Activated T-helper 1 cell treated with anti-CD3 and anti-CD28 coated beads, Interleukin-12 subunit alpha, Interleukin-12 subunit beta, Interleukin-2, Interleukin-4 antibody, amounts not matched to agents 30 ng/mL and 10 ng/mL and 1 ng/mL, durations not matched to agents 14 hours and 24 hours and 36 hours (primary cell): ENCODE measurements at regions of chr19 and their contacts with region 1.

Region 1: DNA sequence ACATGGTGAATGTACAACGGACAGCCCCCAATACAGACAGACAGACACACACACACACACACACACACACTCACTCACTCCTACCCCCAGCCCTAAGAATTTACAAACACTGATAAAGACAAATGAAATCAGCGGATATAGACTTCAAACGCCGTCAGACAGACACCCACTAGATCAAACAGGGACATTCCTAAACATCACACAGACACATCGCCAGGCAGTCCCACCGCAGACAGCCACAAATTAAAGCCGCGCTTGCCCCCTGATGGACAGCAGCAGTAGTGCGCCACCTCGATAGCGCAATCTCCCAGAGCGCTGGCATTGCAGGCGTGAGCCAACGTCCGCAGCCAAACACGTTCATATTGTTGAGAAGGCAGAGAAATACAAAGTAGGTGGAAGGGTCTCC is 24.7 kb upstream of the ADGRE1 start:
- DNase-seq: peak; percentile 86
- H3K4me3 Mint-ChIP-seq: peak overlapping the region; percentile 79
- H3K27ac Mint-ChIP-seq: peak overlapping the region; percentile 74
- H3K4me1 Mint-ChIP-seq: peaks cover 13% of the 10 kb centered on the region
- H3K27me3 Mint-ChIP-seq: no peaks in the 10 kb centered on the region

Region 2: DNA sequence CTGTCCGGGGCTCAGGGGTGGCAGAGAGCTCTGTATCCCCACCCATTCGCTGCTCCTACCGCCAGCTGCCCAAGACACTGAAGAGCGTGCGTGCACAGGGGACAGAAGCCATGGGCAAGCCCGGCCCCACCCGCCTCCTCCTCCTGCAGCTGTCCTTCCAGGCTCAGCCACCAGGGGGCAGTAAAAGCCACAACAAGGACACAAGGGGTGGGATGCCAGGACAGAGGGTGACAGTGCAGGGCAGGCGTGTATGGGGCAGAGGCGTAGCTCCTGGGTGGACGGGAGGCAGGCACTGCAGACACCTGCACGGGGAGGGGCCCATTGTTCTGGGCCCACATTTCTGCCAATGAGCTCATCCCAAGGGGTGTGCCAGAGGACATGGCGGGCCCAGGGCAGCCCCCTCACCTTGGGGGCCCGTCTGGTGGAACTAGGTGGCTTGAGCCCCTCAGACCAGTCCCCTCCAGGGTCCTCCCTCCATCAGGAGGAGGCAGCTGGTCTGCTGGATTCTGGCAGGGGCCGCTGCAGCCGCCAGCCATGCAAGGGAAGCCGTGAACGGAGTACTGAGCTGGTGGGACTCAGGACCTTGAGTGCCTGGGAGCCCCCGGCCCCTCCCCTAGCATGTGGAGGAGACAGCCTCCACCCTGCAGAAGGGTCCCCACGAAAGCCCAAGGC is 644.0 kb before region 1 on chr19:
- intact Hi-C with region 1: loop called (anchors 1 kb)
- DNase-seq: peak; percentile 72
- H3K4me3 Mint-ChIP-seq: no peak overlapping the region
- H3K27ac Mint-ChIP-seq: no peak overlapping the region
- H3K4me1 Mint-ChIP-seq: no peaks in the 10 kb centered on the region
- H3K27me3 Mint-ChIP-seq: no peaks in the 10 kb centered on the region

Region 3: GRCh38 chr19:6424939-6425731 is 437.5 kb before region 1 on chr19:
- intact Hi-C with region 1: loop called (anchors 1 kb)
- DNase-seq: peak; percentile 99
- H3K4me3 Mint-ChIP-seq: peak overlapping the region; percentile 79
- H3K27ac Mint-ChIP-seq: peak overlapping the region; percentile 90
- H3K4me1 Mint-ChIP-seq: peaks cover 28% of the 10 kb centered on the region
- H3K27me3 Mint-ChIP-seq: no peaks in the 10 kb centered on the region

Region 4: DNA sequence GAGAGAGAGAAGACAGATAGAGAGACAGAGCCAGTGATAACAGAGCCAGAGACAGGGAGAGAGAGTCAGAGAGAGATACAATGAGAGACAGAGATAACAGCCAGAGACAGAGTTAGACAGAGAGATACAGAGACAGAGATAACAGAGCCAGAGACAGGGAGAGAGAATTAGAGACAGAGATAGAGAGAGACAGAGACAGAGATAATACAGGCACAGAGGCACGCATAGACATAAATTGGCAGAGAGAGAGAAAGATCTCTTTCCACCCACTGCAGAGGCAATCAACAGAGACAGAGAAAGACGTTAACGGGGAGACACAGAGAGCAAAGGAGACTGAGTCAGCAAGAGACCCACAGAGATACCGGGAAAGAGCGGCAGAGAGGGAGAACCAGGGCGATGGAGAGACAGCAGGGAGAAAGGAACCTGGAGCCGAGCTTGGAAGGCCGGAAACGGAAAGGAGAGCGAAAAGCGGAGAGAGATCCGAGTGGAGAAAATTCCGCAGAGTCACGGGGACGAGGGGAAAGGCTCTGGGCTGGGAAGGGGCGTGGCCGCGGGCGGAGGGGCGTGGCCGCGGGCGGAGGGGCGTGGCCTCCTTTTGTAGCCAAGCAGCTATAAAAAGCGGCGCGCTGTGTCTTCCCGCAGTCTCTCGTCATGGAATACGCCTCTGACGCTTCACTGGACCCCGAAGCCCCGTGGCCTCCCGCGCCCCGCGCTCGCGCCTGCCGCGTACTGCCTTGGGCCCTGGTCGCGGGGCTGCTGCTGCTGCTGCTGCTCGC is 332.1 kb before region 1 on chr19 and contains the start of gene TNFSF9:
- intact Hi-C with region 1: loop called (anchors 1 kb)
- DNase-seq: peak; percentile 77
- H3K4me3 Mint-ChIP-seq: peak within 1 kb of the TSS; percentile 90
- H3K27ac Mint-ChIP-seq: peak within 1 kb of the TSS; percentile 83
- H3K4me1 Mint-ChIP-seq: peaks cover 39% of the 10 kb centered on the region
- H3K27me3 Mint-ChIP-seq: peaks cover 32% of the 10 kb centered on the region
- total RNA-seq, gene TNFSF9: 8.0 and 9.7 TPM in 2 replicates

Region 5: DNA sequence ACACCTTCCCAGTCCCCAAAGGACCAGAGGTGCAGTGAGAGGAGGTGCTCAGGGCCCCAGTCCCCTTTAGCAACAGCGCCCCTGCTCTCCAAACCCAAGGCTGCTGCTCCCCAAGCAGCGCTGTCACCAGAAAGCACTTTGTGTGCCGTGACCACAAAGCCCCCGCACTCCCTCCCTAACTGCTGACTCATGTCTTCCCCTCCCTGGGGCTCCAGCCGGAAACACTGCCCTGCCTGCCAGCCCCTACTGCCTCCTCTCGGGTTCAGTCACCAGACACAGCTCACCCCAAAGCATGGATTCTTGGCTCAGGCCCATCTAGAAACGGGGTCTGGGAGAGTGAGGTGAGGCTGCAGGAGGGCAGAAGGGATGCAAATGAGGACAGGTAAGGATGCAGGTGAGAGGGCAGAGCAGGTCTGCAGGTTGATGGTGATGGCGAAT is 187.8 kb before region 1 on chr19:
- intact Hi-C with region 1: loop called (anchors 2 kb)
- DNase-seq: peak; percentile 84
- H3K4me3 Mint-ChIP-seq: peak overlapping the region; percentile 70
- H3K27ac Mint-ChIP-seq: peak overlapping the region; percentile 94
- H3K4me1 Mint-ChIP-seq: peaks cover 79% of the 10 kb centered on the region
- H3K27me3 Mint-ChIP-seq: peaks cover 4% of the 10 kb centered on the region

Region 6: DNA sequence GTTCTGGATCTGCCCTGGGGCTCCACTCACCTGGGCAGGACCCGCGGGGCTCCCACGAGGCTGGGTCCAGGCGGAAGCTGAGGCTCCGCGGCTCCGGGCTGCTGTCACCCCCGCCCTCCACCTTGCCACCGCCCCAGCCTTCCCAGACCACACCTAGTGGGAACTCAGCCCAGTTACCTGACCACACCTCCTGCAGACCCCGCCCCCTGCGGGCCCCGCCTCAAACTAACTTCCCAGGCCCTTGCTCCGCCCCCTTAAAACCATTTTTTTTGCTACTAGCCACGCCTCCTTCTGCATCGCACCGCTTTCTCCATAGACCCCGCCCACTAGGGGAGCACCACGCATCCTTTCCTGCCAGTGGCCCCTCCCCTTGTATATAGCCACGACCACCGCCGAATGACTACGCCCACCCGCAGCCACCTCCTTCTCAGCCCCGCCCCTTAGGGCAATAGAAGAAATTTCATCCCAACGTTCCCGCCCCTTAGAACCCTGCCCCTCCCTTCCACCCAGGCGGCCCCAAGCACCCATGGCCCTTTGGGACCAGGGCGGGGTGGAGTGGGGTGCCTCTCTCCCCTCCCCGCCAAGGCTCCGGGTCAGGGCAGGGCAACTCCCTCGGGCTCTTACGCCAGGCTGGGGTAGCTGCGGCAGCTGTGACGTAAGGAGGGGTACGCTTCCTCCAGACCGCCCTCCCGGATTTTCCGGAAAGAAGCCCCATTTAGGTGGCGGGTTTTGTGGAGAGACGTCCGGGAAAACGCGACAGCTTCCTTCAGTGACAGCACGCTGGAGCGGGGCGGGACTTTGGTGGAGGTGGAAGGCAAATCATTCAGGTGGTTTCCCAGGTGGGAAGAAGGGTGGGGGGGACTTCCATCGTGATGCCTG is 95.1 kb before region 1 on chr19 and contains the start of gene SH2D3A:
- intact Hi-C with region 1: loop called (anchors 1 kb)
- DNase-seq: peak; percentile 93
- H3K4me3 Mint-ChIP-seq: peak within 1 kb of the TSS; percentile 88
- H3K27ac Mint-ChIP-seq: peak within 1 kb of the TSS; percentile 89
- H3K4me1 Mint-ChIP-seq: peaks cover 53% of the 10 kb centered on the region
- H3K27me3 Mint-ChIP-seq: no peaks in the 10 kb centered on the region
- total RNA-seq, gene SH2D3A: 15.0 and 15.6 TPM in 2 replicates